Activated CD4-positive, alpha-beta memory T cell treated with anti-CD3 and anti-CD28 coated beads for 36 hours (primary cell): ENCODE measurements at regions of chr2 and their contacts with region 1.

Region 1: DNA sequence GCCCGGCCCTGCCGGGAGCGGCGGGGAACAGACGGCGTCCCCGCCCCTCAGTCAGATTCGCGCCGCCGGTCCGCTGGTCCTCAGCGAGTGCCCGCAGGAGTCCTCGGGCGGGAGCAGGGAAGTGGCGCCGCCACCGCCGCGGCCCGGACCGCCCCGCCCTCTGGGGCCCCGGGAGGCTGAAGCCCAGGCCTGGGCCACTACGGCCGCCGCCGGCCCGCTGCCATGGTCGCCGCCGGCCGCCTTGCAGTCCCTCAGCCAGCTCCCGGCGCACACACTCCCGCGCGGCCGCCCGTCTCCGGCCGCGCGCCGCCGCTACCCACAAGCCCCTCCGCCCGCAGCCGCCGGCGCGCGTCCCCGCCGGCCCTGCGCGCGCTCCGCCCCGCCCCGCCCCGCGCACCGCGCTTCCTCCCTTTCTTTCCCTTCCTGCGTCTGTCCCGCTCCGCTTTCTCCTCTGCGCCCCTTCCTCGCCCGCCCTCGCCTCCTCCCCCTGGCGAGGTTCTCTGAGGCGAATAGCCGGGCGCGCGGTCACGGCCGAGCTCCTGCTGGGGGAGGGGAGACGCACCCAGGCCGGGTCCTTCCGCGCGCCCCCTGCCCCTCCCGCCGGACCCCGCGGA is at the start of gene ROCK2:
- DNase-seq: peak; percentile 80
- H3K4me3 Mint-ChIP-seq: peak within 1 kb of the TSS; percentile 98
- H3K27ac Mint-ChIP-seq: peak within 1 kb of the TSS; percentile 89
- H3K4me1 Mint-ChIP-seq: peaks cover 27% of the 10 kb centered on the region
- H3K27me3 Mint-ChIP-seq: no peaks in the 10 kb centered on the region
- total RNA-seq, gene ROCK2: 16.6 to 19.2 TPM

Region 2: GRCh38 chr2:11203480-11203879 is 141.0 kb before region 1 on chr2:
- CTCF ChIA-PET with region 1: no interaction called
- POLR2A ChIA-PET with region 1: interaction called, 8 read pairs
- intact Hi-C with region 1: loop called (anchors 10 kb)
- DNase-seq: no peak
- H3K4me3 Mint-ChIP-seq: no peak overlapping the region
- H3K27ac Mint-ChIP-seq: no peak overlapping the region
- H3K4me1 Mint-ChIP-seq: peaks cover 16% of the 10 kb centered on the region
- H3K27me3 Mint-ChIP-seq: no peaks in the 10 kb centered on the region

Region 3: DNA sequence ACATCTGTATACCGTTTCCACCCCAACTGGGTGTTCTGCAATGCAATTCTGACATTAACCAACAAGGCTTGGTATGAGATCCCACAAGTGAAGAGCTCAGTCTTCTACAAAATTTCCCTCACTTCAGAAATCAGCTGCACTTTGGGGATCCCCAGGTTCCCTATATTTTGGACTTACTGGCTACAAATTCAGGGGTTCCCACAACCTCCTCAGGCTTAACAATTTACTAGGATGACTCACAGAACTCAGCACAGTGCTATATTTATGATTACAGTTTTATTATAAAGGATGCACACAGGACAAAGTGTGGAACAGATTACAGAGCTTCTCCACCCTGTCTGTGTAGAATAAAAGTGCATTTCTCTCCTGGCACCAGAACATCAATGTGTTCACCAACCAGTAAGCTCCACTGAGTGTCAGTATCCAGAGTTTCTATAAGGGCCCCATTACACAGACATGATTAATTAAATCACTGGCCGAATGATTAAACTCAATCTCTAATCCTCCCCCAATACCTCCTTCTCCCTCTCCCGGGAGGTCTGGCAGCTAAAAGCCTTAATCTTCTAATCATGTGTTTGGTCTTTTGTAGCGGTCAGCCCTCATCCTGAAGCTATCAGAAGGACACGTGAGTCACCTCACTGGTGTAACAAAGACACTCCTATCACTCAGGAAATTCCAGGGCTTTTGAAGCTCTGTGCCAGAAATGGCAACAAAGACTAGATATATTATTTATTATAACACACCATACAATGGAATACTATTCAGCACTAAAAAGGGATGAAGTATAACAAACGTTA is 104.6 kb before region 1 on chr2:
- CTCF ChIA-PET with region 1: no interaction called
- POLR2A ChIA-PET with region 1: no interaction called
- intact Hi-C with region 1: loop called (anchors 5 kb)
- DNase-seq: no peak
- H3K4me3 Mint-ChIP-seq: no peak overlapping the region
- H3K27ac Mint-ChIP-seq: no peak overlapping the region
- H3K4me1 Mint-ChIP-seq: peaks cover 12% of the 10 kb centered on the region
- H3K27me3 Mint-ChIP-seq: no peaks in the 10 kb centered on the region

Region 4: DNA sequence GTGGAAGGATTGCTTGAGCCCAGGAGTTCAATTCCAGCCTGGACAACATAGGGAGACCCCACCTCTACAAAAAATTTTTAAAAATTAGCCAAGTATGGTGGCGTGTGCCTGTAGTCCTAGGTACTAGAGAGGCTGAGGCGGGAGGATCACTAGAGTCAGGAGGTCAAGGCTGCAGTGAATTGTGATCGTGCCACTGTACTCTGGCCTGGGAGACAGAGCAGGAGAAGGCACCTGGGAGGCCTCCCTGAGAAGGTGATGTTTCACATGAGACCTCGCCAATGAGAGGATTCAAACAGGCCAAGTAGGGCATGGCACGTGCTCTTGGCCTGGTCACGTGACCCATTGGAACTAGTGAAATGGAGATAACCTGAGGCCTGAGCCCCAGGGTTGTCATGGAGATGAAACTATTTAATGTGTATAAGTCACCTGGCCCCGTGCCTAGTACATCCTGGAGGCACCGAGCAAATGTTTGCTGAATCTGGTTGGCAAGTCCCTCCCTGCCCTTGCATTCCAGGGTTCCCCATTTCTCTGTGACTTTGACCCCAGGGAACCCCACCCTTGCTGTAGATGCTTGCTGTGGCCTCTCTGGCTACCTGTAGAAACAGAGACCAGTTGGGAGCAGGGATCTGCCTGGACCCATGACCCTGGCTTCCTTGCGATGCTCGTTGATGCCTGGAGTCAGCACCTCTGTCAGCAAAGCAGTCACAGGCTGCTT is 26.1 kb after region 1 on chr2:
- CTCF ChIA-PET with region 1: no interaction called
- POLR2A ChIA-PET with region 1: no interaction called
- intact Hi-C with region 1: no loop called
- DNase-seq: no peak
- H3K4me3 Mint-ChIP-seq: no peak overlapping the region
- H3K27ac Mint-ChIP-seq: no peak overlapping the region
- H3K4me1 Mint-ChIP-seq: no peaks in the 10 kb centered on the region
- H3K27me3 Mint-ChIP-seq: no peaks in the 10 kb centered on the region

Region 5: DNA sequence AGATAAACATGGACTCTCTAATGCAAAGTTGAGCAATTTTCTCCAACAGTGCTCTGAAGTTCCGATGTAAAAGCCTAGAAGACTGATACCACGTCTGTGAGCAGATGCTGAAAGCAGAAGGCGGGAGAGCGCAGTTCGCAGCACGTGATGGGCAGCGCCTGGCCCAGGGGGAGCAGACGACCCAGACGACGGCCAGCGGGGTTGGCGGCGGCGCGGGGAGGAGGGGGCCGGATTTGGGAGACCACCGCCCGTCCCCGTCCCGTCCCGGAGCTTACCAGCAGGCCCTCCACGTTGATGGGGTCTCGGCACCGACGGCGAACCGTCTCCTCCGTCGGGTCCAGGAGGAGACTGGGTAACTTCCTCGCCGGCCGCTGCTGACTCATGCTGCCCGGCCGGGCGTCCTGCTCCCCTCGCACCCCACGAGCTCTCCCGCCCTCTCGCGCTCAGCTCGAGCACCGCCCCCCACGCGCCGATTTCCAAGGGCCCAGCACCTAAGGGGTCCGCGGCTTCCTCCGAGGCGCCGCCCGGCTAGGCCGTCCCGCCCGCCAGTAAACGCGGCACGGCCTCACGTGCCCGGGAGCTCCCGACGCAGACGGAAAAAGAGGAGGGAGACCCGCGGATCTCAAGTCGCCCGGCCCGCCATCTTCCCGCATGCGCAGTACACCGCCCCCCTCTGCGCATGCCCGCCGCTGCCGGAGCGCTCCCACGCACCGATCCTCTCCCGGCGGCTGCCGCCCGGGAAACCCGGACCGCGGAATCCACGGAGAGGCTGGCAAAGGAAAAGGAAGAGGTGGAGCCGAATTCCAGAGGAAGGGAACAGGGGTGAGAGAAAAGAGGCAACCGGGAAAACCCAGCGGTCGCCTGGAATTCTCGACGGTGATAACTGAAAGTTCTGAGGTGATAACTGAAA is 121.3 kb after region 1 on chr2 and contains the start of gene E2F6:
- CTCF ChIA-PET with region 1: interaction called, 3 read pairs
- POLR2A ChIA-PET with region 1: interaction called, 8 read pairs
- intact Hi-C with region 1: loop called (anchors 2 kb)
- DNase-seq: peak; percentile 92
- H3K4me3 Mint-ChIP-seq: peak within 1 kb of the TSS; percentile 91
- H3K27ac Mint-ChIP-seq: peak within 1 kb of the TSS; percentile 83
- H3K4me1 Mint-ChIP-seq: peaks cover 36% of the 10 kb centered on the region
- H3K27me3 Mint-ChIP-seq: no peaks in the 10 kb centered on the region
- total RNA-seq, gene E2F6: 9.9 to 10.3 TPM

Region 6: GRCh38 chr2:11753886-11754699 is 409.6 kb after region 1 on chr2:
- CTCF ChIA-PET with region 1: no interaction called
- POLR2A ChIA-PET with region 1: interaction called, 3 read pairs
- intact Hi-C with region 1: loop called (anchors 10 kb)
- DNase-seq: peak; percentile 87
- H3K4me3 Mint-ChIP-seq: peak overlapping the region; percentile 72
- H3K27ac Mint-ChIP-seq: peak overlapping the region; percentile 97
- H3K4me1 Mint-ChIP-seq: peaks cover 90% of the 10 kb centered on the region
- H3K27me3 Mint-ChIP-seq: no peaks in the 10 kb centered on the region